ENCODE measurements at regions of chr7 and their contacts with region 1.

Region 1: DNA sequence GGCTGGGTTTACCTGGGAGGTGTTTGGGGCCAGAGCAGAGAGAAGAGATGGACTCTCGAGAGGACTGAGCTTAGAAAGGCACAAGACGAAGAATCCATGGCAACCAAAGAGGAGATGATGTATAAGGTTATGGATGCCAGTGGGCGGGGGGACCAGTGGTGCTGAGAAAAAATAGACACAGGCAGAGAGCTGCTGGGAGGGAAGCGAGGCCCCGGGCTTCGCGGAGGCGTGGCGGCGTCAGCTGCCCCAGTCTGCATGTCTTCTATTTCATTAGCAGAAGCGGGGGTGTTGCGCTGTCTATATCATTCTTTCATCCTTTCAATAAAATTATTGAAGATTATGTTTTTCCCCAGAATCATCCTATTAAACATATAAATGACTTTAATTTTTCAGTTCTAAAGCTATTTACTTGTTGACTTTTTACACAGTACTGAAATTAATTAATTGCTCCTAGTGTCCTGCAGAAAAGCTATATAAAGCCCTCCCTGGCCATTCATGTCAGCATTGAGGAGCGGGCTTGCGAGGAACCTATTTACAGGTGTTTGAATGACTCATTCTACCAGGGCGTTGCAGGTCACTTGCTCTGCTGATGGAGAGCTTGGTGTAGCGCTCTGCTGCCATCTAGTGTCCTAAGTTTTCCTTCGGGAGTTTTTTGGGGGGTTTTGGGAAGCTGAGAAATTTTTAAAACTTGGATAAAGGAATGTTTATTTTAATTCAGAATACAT is 42.9 kb upstream of the BHLHA15 start:
- DNase-seq: peak; percentile 39
- ATAC-seq: peak; percentile 50 to 53

Region 2: DNA sequence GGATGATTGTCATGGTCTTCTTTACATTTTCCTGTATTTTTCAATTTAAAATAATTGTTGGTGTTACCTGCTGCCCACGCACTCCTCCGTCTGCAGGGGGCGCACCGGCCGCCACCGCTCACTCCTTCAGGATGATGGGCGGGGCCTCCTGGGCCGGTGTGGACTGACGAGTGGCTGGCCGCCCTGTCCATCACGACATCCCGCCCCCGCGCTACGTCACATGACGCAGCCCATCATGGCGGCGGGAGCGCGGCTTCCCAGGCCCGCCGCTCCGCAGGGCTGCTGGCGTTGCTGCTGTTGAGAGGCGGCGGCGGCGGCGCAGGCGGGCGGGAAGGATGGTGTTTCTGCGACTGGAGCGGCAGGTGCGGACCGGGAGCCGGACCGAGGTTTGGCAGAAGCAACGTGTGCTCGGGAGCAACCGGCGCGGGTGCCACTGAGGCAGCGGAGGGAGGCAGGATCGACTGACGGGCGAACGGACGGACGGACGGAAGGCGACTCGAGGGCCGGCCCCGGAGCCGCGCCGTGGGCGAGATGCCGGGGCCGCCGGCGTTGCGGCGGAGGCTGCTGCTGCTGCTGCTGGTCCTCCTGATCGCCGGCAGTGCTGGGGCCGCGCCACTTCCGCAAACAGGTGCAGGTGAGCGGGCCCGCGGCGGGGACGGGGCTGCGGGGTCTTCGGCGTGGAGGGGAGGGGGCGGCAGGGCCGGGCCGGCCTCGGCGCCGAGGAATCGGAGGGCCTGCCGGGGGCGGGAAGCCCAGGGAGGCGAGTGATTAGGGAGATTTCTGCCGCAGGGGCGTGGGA is 61.5 kb before region 1 on chr7 and contains the start of gene LMTK2:
- intact Hi-C with region 1: loop called (anchors 2 to 5 kb)
- DNase-seq: peak; percentile 96
- ATAC-seq: peak; percentile 100
- total RNA-seq, gene LMTK2: 26.7 to 28.4 TPM